Activated CD8-positive, alpha-beta T cell treated with anti-CD3 and anti-CD28 coated beads for 36 hours (primary cell): ENCODE measurements at regions of chr1 and their contacts with region 1.

Region 1: DNA sequence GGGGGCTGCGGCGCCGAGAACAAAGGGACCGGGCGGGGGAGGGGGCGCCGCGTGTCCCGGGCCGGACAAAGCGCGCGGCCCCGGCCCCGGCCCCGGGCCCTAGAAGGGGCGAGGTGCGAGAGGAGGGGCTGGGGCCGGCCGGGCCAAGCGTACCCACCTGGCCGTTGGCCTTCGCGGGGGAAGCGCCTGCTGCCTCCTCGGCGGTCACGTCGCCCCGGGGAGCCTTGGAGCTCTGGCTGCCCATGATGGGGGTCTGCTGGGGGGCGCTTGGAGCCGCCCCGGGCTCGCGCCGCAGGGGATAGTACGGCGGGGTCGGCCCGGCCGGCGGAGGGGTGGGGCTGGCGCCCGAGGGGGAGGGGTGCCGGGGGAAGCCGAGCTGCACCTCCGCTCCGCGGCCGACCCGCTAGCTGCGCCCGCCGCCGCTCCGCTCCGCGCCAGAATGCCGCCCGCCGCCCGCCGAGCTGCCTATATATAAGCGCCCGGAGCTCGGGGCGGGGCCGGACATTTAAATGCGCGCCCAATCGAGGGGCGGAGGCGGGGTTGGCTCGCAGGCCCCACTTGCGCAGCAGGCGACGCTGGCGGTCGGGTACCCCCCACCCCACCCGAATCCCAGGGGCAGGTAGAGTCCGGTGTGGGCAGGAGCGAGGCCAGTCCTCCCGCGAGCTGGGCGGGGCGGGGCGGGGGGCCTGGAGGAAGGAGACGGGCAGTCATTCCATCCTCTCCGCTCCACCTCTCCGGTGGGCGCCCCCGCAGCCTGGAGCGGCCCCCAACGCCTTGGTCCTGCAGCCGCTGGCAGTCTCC is at the start of gene MARCKSL1:
- DNase-seq: peak; percentile 85
- ATAC-seq: peak; percentile 55
- H3K4me3 Mint-ChIP-seq: peak within 1 kb of the TSS; percentile 81
- H3K27ac Mint-ChIP-seq: peak within 1 kb of the TSS; percentile 72
- H3K4me1 Mint-ChIP-seq: peaks cover 49% of the 10 kb centered on the region
- H3K27me3 Mint-ChIP-seq: no peaks in the 10 kb centered on the region
- CTCF ChIP-seq: no peak
- total RNA-seq, gene MARCKSL1: 31.2 to 33.5 TPM

Region 2: GRCh38 chr1:32265846-32266245 is 70.1 kb before region 1 on chr1:
- CTCF ChIA-PET with region 1: no interaction called
- POLR2A ChIA-PET with region 1: no interaction called
- intact Hi-C with region 1: no loop called
- DNase-seq: no peak
- ATAC-seq: no peak
- H3K4me3 Mint-ChIP-seq: no peak overlapping the region
- H3K27ac Mint-ChIP-seq: peak overlapping the region; percentile 89
- H3K4me1 Mint-ChIP-seq: peaks cover 44% of the 10 kb centered on the region
- H3K27me3 Mint-ChIP-seq: no peaks in the 10 kb centered on the region
- CTCF ChIP-seq: no peak

Region 3: GRCh38 chr1:32291708-32292492 is 44.1 kb before region 1 on chr1 and contains the start of gene HDAC1:
- CTCF ChIA-PET with region 1: no interaction called
- POLR2A ChIA-PET with region 1: interaction called, 17 read pairs
- intact Hi-C with region 1: no loop called
- DNase-seq: peak; percentile 98
- ATAC-seq: peak; percentile 98
- H3K4me3 Mint-ChIP-seq: peak within 1 kb of the TSS; percentile 98
- H3K27ac Mint-ChIP-seq: peak within 1 kb of the TSS; percentile 97
- H3K4me1 Mint-ChIP-seq: peaks cover 41% of the 10 kb centered on the region
- H3K27me3 Mint-ChIP-seq: no peaks in the 10 kb centered on the region
- CTCF ChIP-seq: no peak
- total RNA-seq, gene HDAC1: 126 to 127 TPM

Region 4: DNA sequence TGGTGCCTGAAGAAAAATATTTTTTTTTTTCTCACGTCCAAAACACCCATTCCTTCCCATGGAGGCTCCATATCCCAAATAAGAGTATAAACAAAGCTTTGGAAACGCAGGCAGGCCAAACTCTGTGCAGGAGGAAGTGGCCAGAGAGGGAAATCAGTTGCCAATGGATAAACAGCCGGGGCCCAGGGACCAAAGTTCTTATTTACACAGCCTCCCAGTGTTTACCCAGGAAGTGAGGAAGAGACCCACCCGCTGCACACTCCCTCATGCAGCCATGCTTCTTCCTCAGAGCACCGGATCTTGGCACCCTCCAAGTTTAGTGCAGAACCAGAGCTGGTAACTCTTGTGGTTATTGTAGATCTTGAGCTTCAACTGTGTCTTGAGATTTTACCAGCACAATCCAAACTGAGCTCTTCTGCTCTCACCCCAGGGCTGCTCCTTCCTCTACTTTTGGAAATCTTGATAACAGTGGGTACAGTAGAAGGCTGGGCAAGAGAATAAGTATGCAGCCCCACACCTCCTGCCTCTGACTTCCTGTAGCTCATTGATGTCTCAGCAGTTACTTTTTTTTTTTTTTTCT is 14.2 kb before region 1 on chr1:
- CTCF ChIA-PET with region 1: interaction called, 6 read pairs
- POLR2A ChIA-PET with region 1: interaction called, 10 read pairs
- intact Hi-C with region 1: no loop called
- DNase-seq: peak; percentile 32
- ATAC-seq: peak; percentile 65
- H3K4me3 Mint-ChIP-seq: peak overlapping the region; percentile 0
- H3K27ac Mint-ChIP-seq: peak overlapping the region; percentile 81
- H3K4me1 Mint-ChIP-seq: peaks cover 40% of the 10 kb centered on the region
- H3K27me3 Mint-ChIP-seq: no peaks in the 10 kb centered on the region
- CTCF ChIP-seq: no peak

Region 5: GRCh38 chr1:32351399-32352238 is 15.6 kb after region 1 on chr1:
- CTCF ChIA-PET with region 1: interaction called, 17 read pairs
- POLR2A ChIA-PET with region 1: interaction called, 39 read pairs
- intact Hi-C with region 1: no loop called
- DNase-seq: peak; percentile 92
- ATAC-seq: peak; percentile 95
- H3K4me3 Mint-ChIP-seq: peak overlapping the region; percentile 79
- H3K27ac Mint-ChIP-seq: peak overlapping the region; percentile 85
- H3K4me1 Mint-ChIP-seq: peaks cover 39% of the 10 kb centered on the region
- H3K27me3 Mint-ChIP-seq: no peaks in the 10 kb centered on the region
- CTCF ChIP-seq: peak; percentile 3

Region 6: GRCh38 chr1:32372149-32372756 is 36.3 kb after region 1 on chr1:
- CTCF ChIA-PET with region 1: interaction called, 4 read pairs
- POLR2A ChIA-PET with region 1: interaction called, 9 read pairs
- intact Hi-C with region 1: loop called (anchors 5 kb)
- DNase-seq: peak; percentile 55
- ATAC-seq: peak; percentile 82
- H3K4me3 Mint-ChIP-seq: no peak overlapping the region
- H3K27ac Mint-ChIP-seq: peak overlapping the region; percentile 3
- H3K4me1 Mint-ChIP-seq: peaks cover 15% of the 10 kb centered on the region
- H3K27me3 Mint-ChIP-seq: no peaks in the 10 kb centered on the region
- CTCF ChIP-seq: no peak

Region 7: GRCh38 chr1:32394141-32394889 is 58.3 kb after region 1 on chr1 and contains the start of gene BSDC1:
- CTCF ChIA-PET with region 1: interaction called, 4 read pairs
- POLR2A ChIA-PET with region 1: interaction called, 18 read pairs
- intact Hi-C with region 1: no loop called
- DNase-seq: peak; percentile 99
- ATAC-seq: peak; percentile 99
- H3K4me3 Mint-ChIP-seq: peak within 1 kb of the TSS; percentile 82
- H3K27ac Mint-ChIP-seq: peak within 1 kb of the TSS; percentile 96
- H3K4me1 Mint-ChIP-seq: peaks cover 19% of the 10 kb centered on the region
- H3K27me3 Mint-ChIP-seq: no peaks in the 10 kb centered on the region
- CTCF ChIP-seq: no peak
- total RNA-seq, gene BSDC1: 30.6 to 33.3 TPM

Region 8: DNA sequence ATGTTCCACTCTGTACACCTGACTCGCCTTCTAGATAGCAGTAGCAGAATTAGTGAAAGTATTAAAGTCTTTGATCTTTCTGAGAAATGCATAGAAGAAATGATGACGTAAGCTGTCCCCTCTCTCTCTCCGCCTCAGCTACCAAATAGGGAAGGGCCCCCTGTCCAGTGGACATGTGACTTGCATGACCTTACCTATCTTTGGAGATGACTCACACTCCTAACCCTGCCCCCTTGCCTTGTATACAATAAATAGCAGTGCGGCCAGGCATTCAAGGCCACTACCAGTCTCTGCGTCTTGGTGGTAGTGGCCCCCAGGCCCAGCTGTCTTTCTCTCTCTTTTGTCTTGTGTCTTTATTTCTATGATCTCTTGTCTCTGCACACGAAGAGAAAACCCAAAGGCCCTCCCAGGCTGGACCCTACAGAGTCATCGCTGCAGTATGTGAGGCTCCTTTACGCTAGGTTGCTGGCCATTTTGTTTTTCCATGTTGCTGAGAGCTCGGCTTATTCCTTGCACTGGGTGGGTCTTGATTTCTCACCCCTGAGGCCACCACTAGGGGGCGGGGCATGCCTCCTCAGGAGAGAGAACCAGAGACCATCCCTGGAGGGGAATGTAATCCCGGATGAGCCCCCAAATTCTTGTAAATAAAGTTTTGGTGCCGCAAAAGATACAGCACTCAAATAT is 112.9 kb after region 1 on chr1:
- CTCF ChIA-PET with region 1: no interaction called
- POLR2A ChIA-PET with region 1: no interaction called
- intact Hi-C with region 1: no loop called
- DNase-seq: peak; percentile 44
- ATAC-seq: no peak
- H3K4me3 Mint-ChIP-seq: no peak overlapping the region
- H3K27ac Mint-ChIP-seq: no peak overlapping the region
- H3K4me1 Mint-ChIP-seq: no peaks in the 10 kb centered on the region
- H3K27me3 Mint-ChIP-seq: peaks cover 26% of the 10 kb centered on the region
- CTCF ChIP-seq: no peak

Region 9: GRCh38 chr1:33342041-33342723 is 1006.2 kb after region 1 on chr1:
- CTCF ChIA-PET with region 1: no interaction called
- POLR2A ChIA-PET with region 1: no interaction called
- intact Hi-C with region 1: no loop called
- DNase-seq: no peak
- ATAC-seq: no peak
- H3K4me3 Mint-ChIP-seq: no peak overlapping the region
- H3K27ac Mint-ChIP-seq: no peak overlapping the region
- H3K4me1 Mint-ChIP-seq: peaks cover 50% of the 10 kb centered on the region
- H3K27me3 Mint-ChIP-seq: no peaks in the 10 kb centered on the region
- CTCF ChIP-seq: no peak